ENCODE measurements at regions of chr10 and their contacts with region 1.

Region 1: DNA sequence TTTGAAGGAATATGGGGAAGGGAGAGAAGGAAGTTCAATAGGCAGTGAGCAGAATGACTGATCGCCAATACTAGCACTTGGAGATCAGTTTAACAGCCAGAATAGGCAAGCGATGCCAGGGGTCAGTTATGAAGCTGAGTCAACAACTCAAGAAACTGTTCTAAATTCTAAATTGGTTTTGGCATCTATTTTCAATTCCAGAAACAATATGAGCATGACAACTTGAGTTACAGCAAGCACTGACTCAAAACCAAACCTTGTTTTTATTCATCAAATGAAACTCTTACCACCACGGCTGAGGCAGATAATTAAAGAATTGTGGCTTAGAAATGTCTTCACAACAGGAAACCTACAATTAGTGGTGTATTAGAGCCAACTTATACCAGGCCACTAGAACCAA is 180.5 kb upstream of the ASAH2 start:
- DNase-seq: peak; percentile 96
- ATAC-seq: peak; percentile 89
- H3K4me3 ChIP-seq: peak overlapping the region; percentile 45; the same call in 1 of the 2 replicates
- H3K27ac ChIP-seq: peak overlapping the region; percentile 80; the same call in 1 of the 2 replicates
- H3K4me1 ChIP-seq: peaks cover 25% of the 10 kb centered on the region
- H3K27me3 ChIP-seq: no peaks in the 10 kb centered on the region
- CTCF ChIP-seq: no peak
- EP300 ChIP-seq: peak; percentile 99
- POLR2A ChIP-seq: no peak
- RAD21 ChIP-seq: no peak; the same call in 1 of the 2 replicates

Region 2: DNA sequence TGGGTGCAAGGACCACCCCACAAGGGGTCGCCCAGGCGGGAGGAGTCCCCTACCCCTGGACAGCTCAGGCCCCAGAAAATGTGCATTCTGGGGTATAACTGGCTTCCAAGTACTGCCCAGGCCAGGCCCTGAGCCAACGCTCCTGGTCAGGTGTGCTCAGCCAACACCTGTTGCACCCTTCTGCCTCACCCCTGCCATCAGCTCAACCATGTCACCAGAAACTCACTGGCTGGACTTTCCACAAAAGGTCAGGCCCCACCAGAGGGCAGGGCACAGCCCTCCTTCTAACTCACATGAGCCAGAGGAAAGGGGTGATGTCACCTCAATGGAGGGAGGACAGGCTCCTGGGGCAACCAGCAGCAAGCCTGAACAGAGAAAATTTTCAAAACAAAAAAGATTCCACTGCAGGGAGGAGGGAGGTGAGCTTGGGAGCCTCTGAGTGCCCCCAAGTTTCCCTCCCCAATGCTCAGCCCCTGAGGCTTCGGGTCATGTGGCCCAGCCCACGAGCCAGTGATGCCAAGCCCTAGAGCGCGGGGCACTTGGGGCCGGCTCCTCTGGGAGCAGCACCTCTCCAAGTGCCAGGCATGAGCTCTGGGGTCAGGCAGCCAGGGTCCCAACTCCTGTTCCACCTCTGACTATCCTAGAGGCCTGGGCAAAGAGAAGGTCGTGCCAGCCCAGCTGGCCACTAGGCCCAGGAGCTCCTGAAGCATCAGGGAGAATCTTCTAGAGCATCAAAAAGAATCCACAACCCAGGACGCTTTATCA is 671.8 kb before region 1 on chr10:
- CTCF ChIA-PET with region 1: no interaction called
- POLR2A ChIA-PET with region 1: no interaction called
- RAD21 ChIA-PET with region 1: no interaction called
- SMC1A ChIA-PET with region 1: no interaction called
- in situ Hi-C with region 1: no loop called
- intact Hi-C with region 1: no loop called
- DNase-seq: no peak
- ATAC-seq: no peak
- H3K4me3 ChIP-seq: no peak overlapping the region
- H3K27ac ChIP-seq: no peak overlapping the region
- H3K4me1 ChIP-seq: no peaks in the 10 kb centered on the region
- H3K27me3 ChIP-seq: no peaks in the 10 kb centered on the region
- CTCF ChIP-seq: no peak
- EP300 ChIP-seq: no peak
- POLR2A ChIP-seq: no peak
- RAD21 ChIP-seq: no peak

Region 3: DNA sequence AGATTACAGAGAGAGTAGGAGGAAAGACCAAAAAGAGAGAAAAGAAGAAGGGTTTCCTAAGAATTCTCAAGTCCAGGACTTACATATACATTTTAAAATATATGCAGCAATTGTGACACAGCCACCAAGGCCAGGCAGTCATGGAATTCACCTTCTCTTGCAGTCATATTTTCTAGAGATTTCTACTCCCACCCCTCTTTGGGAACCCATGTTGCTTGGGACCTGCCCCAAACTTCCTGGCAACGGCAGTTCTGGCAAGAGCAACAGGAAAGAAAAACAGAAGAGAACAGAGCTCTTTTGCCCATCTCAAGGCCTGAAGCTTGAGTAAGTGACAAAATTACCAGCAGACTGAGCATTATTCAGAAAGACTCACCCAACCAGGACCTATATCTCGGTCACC is 52.2 kb before region 1 on chr10:
- CTCF ChIA-PET with region 1: no interaction called
- POLR2A ChIA-PET with region 1: no interaction called
- RAD21 ChIA-PET with region 1: no interaction called
- SMC1A ChIA-PET with region 1: no interaction called
- in situ Hi-C with region 1: no loop called
- intact Hi-C with region 1: no loop called
- DNase-seq: no peak
- ATAC-seq: no peak
- H3K4me3 ChIP-seq: no peak overlapping the region
- H3K27ac ChIP-seq: no peak overlapping the region
- H3K4me1 ChIP-seq: peaks cover 12% of the 10 kb centered on the region
- H3K27me3 ChIP-seq: no peaks in the 10 kb centered on the region
- CTCF ChIP-seq: no peak
- EP300 ChIP-seq: no peak
- POLR2A ChIP-seq: no peak
- RAD21 ChIP-seq: no peak

Region 4: DNA sequence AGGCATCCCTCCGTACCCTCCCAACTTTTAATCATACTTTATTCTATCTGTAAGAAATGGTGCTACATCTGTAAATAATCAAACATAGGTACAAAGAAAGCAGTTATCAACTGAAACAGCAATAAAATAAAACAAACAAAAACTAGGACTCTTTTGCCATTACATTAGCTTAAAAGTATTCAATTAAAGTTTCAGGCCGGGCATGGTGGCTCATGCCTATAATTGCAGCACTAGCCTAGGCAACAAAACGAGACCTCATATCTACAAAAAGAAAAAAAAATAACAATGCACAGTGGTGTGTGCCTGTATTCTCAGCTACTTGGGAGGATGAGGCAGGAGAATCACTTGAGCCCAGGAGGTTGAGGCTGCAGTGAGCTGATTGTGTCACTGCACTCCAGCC is 30.0 kb after region 1 on chr10:
- CTCF ChIA-PET with region 1: interaction called, 4 read pairs
- POLR2A ChIA-PET with region 1: interaction called, 3 read pairs
- RAD21 ChIA-PET with region 1: interaction called, 5 read pairs
- SMC1A ChIA-PET with region 1: interaction called, 10 read pairs
- in situ Hi-C with region 1: no loop called
- intact Hi-C with region 1: no loop called
- DNase-seq: no peak
- ATAC-seq: no peak
- H3K4me3 ChIP-seq: no peak overlapping the region
- H3K27ac ChIP-seq: no peak overlapping the region
- H3K4me1 ChIP-seq: peaks cover 3% of the 10 kb centered on the region; the same call in 1 of the 2 replicates
- H3K27me3 ChIP-seq: no peaks in the 10 kb centered on the region; a peak in 1 of 4 replicates
- CTCF ChIP-seq: no peak
- EP300 ChIP-seq: no peak
- POLR2A ChIP-seq: no peak
- RAD21 ChIP-seq: no peak

Measured in GM12878 (cell line).